Activated naive CD4-positive, alpha-beta T cell treated with anti-CD3 and anti-CD28 coated beads for 36 hours (primary cell): ENCODE measurements at regions of chr3 and their contacts with region 1.

Region 1: GRCh38 chr3:134473868-134474546 is 11.8 kb downstream of the ANAPC13 start:
- DNase-seq: peak; percentile 91
- H3K4me3 Mint-ChIP-seq: no peak overlapping the region
- H3K27ac Mint-ChIP-seq: no peak overlapping the region
- H3K4me1 Mint-ChIP-seq: no peaks in the 10 kb centered on the region
- H3K27me3 Mint-ChIP-seq: no peaks in the 10 kb centered on the region

Region 2: GRCh38 chr3:133661454-133662277 is 812.3 kb before region 1 on chr3 and contains the start of gene TOPBP1:
- CTCF ChIA-PET with region 1: no interaction called
- intact Hi-C with region 1: loop called (anchors 2 kb)
- DNase-seq: peak; percentile 94
- H3K4me3 Mint-ChIP-seq: peak within 1 kb of the TSS; percentile 98
- H3K27ac Mint-ChIP-seq: peak within 1 kb of the TSS; percentile 98
- H3K4me1 Mint-ChIP-seq: peaks cover 28% of the 10 kb centered on the region
- H3K27me3 Mint-ChIP-seq: no peaks in the 10 kb centered on the region
- total RNA-seq, gene TOPBP1: 65.4 to 65.8 TPM

Region 3: GRCh38 chr3:134197681-134198261 is 276.2 kb before region 1 on chr3:
- CTCF ChIA-PET with region 1: interaction called, 52 read pairs
- intact Hi-C with region 1: loop called (anchors 1 kb)
- DNase-seq: peak; percentile 14
- H3K4me3 Mint-ChIP-seq: no peak overlapping the region
- H3K27ac Mint-ChIP-seq: no peak overlapping the region
- H3K4me1 Mint-ChIP-seq: peaks cover 7% of the 10 kb centered on the region
- H3K27me3 Mint-ChIP-seq: no peaks in the 10 kb centered on the region

Region 4: GRCh38 chr3:134308350-134308891 is 165.6 kb before region 1 on chr3:
- CTCF ChIA-PET with region 1: interaction called, 95 read pairs
- intact Hi-C with region 1: loop called (anchors 1 kb)
- DNase-seq: peak; percentile 86
- H3K4me3 Mint-ChIP-seq: no peak overlapping the region
- H3K27ac Mint-ChIP-seq: no peak overlapping the region
- H3K4me1 Mint-ChIP-seq: peaks cover 2% of the 10 kb centered on the region
- H3K27me3 Mint-ChIP-seq: peaks cover 20% of the 10 kb centered on the region

Region 5: GRCh38 chr3:134357261-134358184 is 116.5 kb before region 1 on chr3:
- CTCF ChIA-PET with region 1: interaction called, 3 read pairs
- intact Hi-C with region 1: loop called (anchors 2 kb)
- DNase-seq: no peak
- H3K4me3 Mint-ChIP-seq: no peak overlapping the region
- H3K27ac Mint-ChIP-seq: no peak overlapping the region
- H3K4me1 Mint-ChIP-seq: no peaks in the 10 kb centered on the region
- H3K27me3 Mint-ChIP-seq: no peaks in the 10 kb centered on the region

Region 6: DNA sequence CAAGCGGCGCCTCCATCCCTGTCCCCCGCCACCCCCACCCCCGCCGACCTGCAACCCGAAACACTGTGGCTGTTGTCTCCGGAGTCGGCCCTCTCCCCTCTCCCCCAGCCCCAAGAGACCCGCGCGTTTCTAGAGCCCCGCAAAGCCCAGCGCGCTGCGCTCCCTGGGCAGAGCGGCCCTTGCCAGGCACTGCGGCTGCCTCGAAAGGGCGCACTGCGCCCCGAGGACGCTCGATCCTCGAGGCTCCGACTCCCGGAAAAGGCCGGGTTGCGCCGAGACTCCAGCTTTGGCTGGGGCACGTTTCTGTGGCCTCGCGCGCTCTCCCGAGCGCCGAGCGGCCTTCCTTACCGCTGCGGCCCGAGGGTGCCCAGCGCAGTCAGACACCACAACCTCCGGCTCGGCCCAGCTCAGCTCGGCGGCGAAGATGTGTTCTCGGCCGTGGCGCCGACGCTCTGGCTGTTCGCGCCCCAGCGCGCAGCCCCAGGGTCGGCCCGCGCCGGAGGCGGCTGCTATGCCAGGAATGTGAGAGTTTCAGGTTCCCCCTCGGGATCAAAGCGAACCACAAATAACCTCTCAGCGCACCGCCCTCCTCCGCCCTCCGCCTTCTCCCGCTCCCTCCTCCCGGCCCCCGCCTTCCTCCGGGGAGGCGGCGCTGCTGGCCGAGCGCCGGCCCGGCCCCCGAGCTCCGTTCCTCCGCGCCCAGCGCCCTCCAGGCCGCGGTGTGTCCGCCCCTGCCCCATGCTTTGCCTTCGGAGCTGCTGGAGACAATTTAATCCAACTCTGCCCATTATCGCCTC is 99.8 kb before region 1 on chr3 and contains the start of gene AMOTL2:
- CTCF ChIA-PET with region 1: interaction called, 4 read pairs
- intact Hi-C with region 1: loop called (anchors 2 kb)
- DNase-seq: peak; percentile 31
- H3K4me3 Mint-ChIP-seq: peak within 1 kb of the TSS; percentile 79
- H3K27ac Mint-ChIP-seq: no peak within 1 kb of the TSS
- H3K4me1 Mint-ChIP-seq: peaks cover 14% of the 10 kb centered on the region
- H3K27me3 Mint-ChIP-seq: peaks cover 28% of the 10 kb centered on the region
- total RNA-seq, gene AMOTL2: 0.31 TPM in 1 of 2 experiments, not detected in the other

Region 7: GRCh38 chr3:134457376-134458074 is 16.5 kb before region 1 on chr3:
- CTCF ChIA-PET with region 1: interaction called, 12 read pairs
- intact Hi-C with region 1: no loop called
- DNase-seq: no peak
- H3K4me3 Mint-ChIP-seq: no peak overlapping the region
- H3K27ac Mint-ChIP-seq: no peak overlapping the region
- H3K4me1 Mint-ChIP-seq: no peaks in the 10 kb centered on the region
- H3K27me3 Mint-ChIP-seq: peaks cover 8% of the 10 kb centered on the region

Region 8: GRCh38 chr3:134600685-134601463 is 126.9 kb after region 1 on chr3:
- CTCF ChIA-PET with region 1: no interaction called
- intact Hi-C with region 1: no loop called
- DNase-seq: peak; percentile 74
- H3K4me3 Mint-ChIP-seq: no peak overlapping the region
- H3K27ac Mint-ChIP-seq: no peak overlapping the region
- H3K4me1 Mint-ChIP-seq: peaks cover 4% of the 10 kb centered on the region
- H3K27me3 Mint-ChIP-seq: peaks cover 5% of the 10 kb centered on the region